Activated B cell treated with CpG ODN at 0.5 μM for 24 hours (primary cell): ENCODE measurements at regions of chr1 and their contacts with region 1.

Region 1: DNA sequence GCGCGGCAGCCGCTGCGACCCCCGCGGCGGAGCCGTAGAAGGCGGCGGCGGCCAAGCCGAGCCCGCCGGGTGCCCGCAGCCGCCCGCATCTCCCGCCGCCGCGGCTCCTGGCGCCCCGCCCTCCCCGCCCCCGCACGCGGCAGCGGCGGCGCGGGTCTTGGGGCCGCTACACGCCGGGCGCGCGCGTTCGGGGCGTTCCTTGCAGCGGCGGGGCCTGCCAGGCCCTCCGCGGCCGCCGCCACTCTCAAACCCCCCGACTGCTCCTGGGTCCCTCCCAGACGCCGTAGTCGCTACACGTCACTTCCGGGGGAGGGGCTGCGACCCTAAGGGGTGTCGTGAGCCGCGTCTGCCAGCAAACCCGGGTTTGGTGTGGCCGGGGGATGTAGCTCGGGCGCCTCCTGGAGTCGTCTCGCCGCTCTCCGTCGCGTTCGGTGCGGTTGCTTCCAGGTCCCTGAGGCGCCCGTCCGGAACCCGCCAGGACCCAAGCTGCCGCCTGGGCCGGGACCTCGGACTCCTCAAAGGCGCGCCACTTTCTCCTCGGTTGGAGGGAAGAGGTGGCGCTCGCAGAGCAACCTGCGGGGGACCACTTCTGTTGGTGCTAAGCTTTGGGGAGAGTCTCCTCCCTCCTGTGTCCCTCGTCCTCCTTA is at the start of gene ELK4:
- DNase-seq: peak; percentile 99
- ATAC-seq: peak; percentile 83
- H3K4me3 Mint-ChIP-seq: peak within 1 kb of the TSS; percentile 96
- H3K27ac Mint-ChIP-seq: peak within 1 kb of the TSS; percentile 96
- H3K4me1 Mint-ChIP-seq: peaks cover 46% of the 10 kb centered on the region
- H3K27me3 Mint-ChIP-seq: no peaks in the 10 kb centered on the region
- CTCF ChIP-seq: no peak
- total RNA-seq, gene ELK4: 130 and 141 TPM in 2 replicates

Region 2: DNA sequence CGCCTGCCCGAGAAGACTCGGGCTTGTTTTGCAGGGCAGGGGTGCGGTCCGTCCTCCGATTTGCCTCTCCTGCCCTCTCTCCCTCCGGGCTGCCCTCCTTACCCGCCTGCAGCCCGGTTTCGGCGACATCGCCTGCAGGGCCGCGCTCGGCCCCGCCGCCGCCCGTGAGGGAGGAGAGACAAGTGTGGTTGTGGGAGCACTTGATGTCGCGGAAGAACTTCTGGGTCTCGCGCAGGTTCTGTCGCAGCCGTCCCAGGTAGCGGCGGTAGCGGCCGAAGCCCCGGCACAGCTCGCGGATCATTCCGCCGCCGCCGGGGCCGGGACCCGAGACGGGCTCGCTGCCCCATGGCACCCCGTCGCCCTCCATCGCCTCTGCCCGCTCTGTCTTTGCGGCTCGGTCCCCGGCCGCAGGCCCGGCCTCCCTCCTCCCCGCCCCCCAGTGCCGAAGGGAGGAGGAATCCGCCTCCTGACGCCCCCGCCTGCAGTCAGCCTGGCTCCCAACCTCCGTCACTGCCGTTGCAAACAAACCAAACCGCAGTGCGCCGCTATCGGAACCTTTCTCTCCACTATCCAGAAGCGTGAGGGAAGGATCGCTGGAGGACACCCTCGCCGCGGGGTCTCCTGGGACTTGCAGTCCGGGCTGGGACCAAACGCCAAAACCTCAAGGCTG is 420.5 kb before region 1 on chr1 and contains the start of gene DSTYK:
- CTCF ChIA-PET with region 1: no interaction called
- POLR2A ChIA-PET with region 1: no interaction called
- intact Hi-C with region 1: loop called (anchors 1 kb)
- DNase-seq: peak; percentile 81
- ATAC-seq: peak; percentile 82
- H3K4me3 Mint-ChIP-seq: peak within 1 kb of the TSS; percentile 95
- H3K27ac Mint-ChIP-seq: peak within 1 kb of the TSS; percentile 97
- H3K4me1 Mint-ChIP-seq: peaks cover 35% of the 10 kb centered on the region
- H3K27me3 Mint-ChIP-seq: no peaks in the 10 kb centered on the region
- CTCF ChIP-seq: no peak
- total RNA-seq, gene DSTYK: 7.3 and 9.6 TPM in 2 replicates

Region 3: GRCh38 chr1:205248793-205249601 is 382.9 kb before region 1 on chr1:
- CTCF ChIA-PET with region 1: no interaction called
- POLR2A ChIA-PET with region 1: no interaction called
- intact Hi-C with region 1: no loop called
- DNase-seq: no peak
- ATAC-seq: no peak
- H3K4me3 Mint-ChIP-seq: no peak overlapping the region
- H3K27ac Mint-ChIP-seq: no peak overlapping the region
- H3K4me1 Mint-ChIP-seq: no peaks in the 10 kb centered on the region
- H3K27me3 Mint-ChIP-seq: no peaks in the 10 kb centered on the region
- CTCF ChIP-seq: no peak

Region 4: DNA sequence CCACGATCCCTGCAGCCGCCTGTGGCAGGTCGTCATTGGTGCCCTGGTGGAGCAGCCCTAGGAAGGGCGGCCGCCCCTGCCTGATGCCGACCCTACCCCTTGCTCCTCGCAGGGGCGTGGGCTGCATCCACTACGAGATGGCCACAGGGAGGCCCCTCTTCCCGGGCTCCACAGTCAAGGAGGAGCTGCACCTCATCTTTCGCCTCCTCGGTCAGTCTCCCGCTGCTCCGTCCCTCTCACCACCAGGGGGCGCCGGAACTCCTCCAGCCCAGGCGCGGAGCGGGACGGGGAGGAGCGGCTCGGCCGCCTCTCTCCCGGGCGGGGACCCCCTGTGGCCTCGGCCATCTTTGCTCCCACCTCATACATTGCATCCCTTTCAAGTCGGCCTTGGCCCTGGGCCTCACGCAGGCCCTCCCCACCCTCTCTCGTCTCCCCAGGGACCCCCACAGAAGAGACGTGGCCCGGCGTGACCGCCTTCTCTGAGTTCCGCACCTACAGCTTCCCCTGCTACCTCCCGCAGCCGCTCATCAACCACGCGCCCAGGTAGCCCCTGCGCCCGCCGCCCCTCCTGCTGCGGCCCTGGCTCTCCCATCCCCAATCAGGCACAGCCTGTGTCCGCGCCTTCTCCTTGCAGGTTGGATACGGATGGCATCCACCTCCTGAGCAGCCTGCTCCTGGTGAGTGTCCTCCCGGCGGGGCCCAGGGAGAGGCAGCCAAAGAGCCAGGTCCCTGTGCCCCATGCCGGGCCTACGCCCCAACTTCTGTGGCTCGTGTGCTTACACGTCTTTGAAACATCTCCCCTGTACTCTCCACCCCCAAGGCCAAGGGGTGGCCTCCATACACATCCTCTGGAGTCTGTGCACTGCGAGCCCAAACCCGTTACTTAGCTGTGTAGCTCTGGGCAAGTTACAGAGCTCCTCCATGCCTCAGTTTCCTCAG is 102.7 kb before region 1 on chr1:
- CTCF ChIA-PET with region 1: interaction called, 19 read pairs
- POLR2A ChIA-PET with region 1: interaction called, 10 read pairs
- intact Hi-C with region 1: loop called (anchors 1 kb)
- DNase-seq: peak; percentile 84
- ATAC-seq: peak; percentile 92
- H3K4me3 Mint-ChIP-seq: peak overlapping the region; percentile 72
- H3K27ac Mint-ChIP-seq: no peak overlapping the region
- H3K4me1 Mint-ChIP-seq: peaks cover 4% of the 10 kb centered on the region
- H3K27me3 Mint-ChIP-seq: peaks cover 3% of the 10 kb centered on the region
- CTCF ChIP-seq: peak; percentile 58

Region 5: DNA sequence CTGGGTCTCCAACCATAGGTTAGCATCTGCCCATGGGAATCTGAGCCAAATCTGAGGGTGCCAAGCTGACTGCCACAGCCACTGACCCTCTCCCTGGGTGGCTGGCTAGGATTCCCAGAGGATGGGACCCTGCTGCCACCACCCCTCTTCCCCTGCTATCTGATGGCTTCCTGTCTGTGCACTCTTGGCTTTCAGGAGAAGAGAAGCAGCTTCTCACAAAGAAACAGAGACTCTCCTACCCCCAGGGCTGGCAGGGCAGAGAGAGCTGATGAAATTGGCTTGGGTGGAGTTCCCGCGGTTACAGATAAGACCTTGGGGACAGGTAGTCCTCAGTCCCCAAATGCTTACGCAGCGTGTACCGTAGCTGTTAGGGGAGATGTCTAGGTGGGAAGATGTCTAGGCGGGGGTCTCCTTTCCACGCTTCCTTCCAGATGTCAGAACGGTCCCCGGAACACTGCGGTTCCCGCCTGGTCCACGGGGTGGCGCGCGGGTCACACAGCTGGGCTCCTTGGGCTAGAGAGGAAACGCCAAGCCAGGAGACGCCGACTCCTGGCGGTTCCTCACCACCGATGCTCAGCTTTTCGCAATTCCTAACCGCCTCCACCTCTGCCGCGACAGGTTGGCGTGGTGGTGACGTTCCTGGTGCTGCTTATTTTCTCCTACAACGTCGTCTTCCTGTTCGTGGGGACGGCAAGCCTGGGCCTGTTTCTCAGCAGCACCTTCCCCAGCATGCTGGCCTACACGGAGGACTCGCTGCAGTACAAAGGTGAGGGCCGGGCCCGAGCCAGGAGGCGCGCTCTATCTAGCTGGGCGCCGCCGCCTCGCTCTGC is 40.1 kb before region 1 on chr1:
- CTCF ChIA-PET with region 1: interaction called, 126 read pairs
- POLR2A ChIA-PET with region 1: interaction called, 119 read pairs
- intact Hi-C with region 1: loop called (anchors 1 kb)
- DNase-seq: peak; percentile 89
- ATAC-seq: peak; percentile 89
- H3K4me3 Mint-ChIP-seq: peak overlapping the region; percentile 90
- H3K27ac Mint-ChIP-seq: peak overlapping the region; percentile 90
- H3K4me1 Mint-ChIP-seq: peaks cover 48% of the 10 kb centered on the region
- H3K27me3 Mint-ChIP-seq: no peaks in the 10 kb centered on the region
- CTCF ChIP-seq: peak; percentile 87

Region 6: GRCh38 chr1:205619376-205619775 is 12.5 kb before region 1 on chr1:
- CTCF ChIA-PET with region 1: interaction called, 8 read pairs
- POLR2A ChIA-PET with region 1: interaction called, 7 read pairs
- intact Hi-C with region 1: loop called (anchors 2 kb)
- DNase-seq: no peak
- ATAC-seq: no peak
- H3K4me3 Mint-ChIP-seq: no peak overlapping the region
- H3K27ac Mint-ChIP-seq: no peak overlapping the region
- H3K4me1 Mint-ChIP-seq: peaks cover 19% of the 10 kb centered on the region
- H3K27me3 Mint-ChIP-seq: no peaks in the 10 kb centered on the region
- CTCF ChIP-seq: no peak

Region 7: DNA sequence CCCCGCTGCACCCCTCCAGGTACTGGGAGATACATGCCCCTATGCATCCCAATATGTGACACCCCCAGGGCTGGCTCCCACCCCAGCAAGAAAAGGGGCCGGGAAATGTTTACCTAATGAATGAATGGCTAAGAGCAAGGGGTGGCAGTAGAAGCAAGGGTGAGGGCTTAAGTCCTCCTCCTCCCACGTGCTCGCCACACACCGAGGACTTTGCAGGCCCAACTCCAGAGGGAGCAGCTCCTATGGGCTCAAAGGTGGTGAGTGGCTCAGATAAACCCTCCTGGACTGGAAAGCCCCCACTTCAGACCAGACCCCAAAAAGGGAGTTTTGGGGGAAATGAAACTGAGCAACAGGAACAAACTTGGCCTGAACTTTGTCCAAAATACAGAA is 37.1 kb after region 1 on chr1:
- CTCF ChIA-PET with region 1: no interaction called
- POLR2A ChIA-PET with region 1: interaction called, 28 read pairs
- intact Hi-C with region 1: no loop called
- DNase-seq: no peak
- ATAC-seq: peak; percentile 68
- H3K4me3 Mint-ChIP-seq: peak overlapping the region; percentile 80
- H3K27ac Mint-ChIP-seq: peak overlapping the region; percentile 93
- H3K4me1 Mint-ChIP-seq: peaks cover 87% of the 10 kb centered on the region
- H3K27me3 Mint-ChIP-seq: no peaks in the 10 kb centered on the region
- CTCF ChIP-seq: no peak